Aorta (tissue), 5 donors: ENCODE measurements at regions of chr15 and their contacts with region 1.

Region 1: DNA sequence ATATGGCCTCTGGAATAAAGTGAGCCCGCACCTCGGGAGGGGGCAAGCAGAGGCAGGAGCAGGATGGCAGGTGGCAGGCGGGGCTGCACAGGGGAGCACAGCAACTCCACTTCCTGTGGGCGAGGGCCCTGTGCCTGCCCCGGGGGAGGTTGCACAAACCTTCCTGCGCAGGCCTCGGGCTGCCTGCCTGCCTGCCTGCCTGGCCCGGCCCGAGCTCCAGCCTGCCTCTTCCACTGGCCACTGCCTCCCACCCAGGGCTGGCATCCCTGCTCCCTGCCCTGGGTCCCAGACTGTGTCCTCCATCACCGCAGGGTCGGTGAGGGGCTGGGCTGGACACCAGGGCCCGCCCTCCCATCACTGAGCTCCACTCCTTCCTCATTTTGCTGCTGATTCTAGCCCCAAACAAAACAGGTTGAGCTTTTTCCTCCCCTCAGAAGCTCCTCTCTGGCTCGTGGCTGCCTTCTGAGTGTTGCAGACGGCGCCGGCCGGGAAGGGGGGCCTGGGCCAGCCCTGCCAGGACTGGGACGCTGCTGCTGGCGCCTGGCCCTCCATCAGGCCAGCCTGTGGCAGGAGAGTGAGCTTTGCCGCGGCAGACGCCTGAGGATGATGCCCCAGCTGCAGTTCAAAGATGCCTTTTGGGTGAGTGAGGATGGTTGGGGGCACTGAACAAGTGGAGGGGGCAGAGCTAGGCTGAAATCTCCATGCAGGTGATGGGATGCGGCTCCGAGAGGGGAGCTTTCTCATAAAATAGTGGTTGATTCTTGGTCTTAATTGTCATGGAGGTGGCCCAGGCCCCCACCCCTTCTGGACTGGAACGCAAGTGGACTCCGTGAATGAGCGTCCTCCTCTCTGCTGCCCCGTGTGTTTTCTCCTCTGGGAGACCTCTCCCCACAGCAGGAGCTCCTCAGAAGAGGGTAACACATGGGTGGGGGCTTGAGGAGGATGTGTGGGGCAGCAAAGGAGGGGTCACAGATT is at the start of gene PSTPIP1:
- DNase-seq: peak; percentile 80 to 90
- ATAC-seq: peak; percentile 70
- H3K4me3 ChIP-seq: no peak within 1 kb of the TSS
- H3K27ac ChIP-seq: peak within 1 kb of the TSS; percentile 64 to 85
- H3K4me1 ChIP-seq: no peaks in the 10 kb centered on the region
- H3K27me3 ChIP-seq: no peaks in the 10 kb centered on the region
- total RNA-seq, gene PSTPIP1: 14.1 to 42.9 TPM

Region 2: GRCh38 chr15:76973362-76973743 is 21.9 kb before region 1 on chr15:
- intact Hi-C with region 1: loop called in 1 of 2 experiments (anchors 2 kb)
- DNase-seq: peak; percentile 82
- ATAC-seq: peak; percentile 63
- H3K4me3 ChIP-seq: no peak overlapping the region
- H3K27ac ChIP-seq: peak overlapping the region; percentile 81 to 86
- H3K4me1 ChIP-seq: peaks cover 0 to 6% of the 10 kb centered on the region in 2 donors
- H3K27me3 ChIP-seq: no peaks in the 10 kb centered on the region

Region 3: DNA sequence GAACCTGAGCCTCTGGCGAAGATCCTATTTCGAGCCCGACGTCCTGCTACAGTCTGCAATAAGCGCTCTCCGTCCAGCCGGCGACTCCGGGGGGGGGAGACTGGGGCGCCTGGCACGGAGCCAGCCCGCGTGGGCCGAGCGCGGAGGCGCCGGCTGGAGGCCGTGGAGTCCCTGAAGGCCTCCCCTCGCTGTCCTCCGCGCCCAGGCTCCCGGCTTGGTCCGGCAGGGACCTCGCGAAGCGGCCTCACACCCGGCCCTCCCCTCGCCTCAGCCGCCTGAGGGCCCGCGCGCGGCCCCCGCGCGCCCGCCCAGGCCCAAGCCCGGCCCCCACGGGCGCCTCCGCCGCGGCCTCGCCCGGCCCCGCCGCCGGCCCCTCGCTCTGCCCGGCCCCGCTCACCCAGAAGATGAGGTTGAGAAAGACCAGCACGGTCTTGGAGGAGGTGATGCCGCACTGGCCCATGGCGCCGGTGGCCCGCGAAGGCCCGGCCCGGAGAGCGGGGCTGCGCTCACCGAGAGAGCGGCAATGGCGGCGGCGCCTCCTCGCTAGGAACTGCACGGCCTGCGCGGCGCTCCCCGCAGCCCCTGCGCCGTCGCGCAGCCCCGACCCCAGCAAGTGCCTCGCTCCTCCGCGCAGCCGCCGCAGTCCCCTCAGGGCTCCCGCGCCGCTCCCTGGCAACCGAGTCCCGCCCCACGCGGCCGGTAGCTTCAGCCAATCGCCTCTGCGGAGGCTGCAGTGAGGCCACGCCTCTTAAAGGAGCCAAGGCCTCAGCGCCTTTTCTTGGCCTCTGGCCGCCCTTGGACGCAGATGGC is 75.4 kb after region 1 on chr15 and contains the start of gene TSPAN3:
- intact Hi-C with region 1: loop called in 1 of 2 experiments (anchors 1 kb)
- DNase-seq: peak; percentile 96 to 97
- ATAC-seq: peak; percentile 97
- H3K4me3 ChIP-seq: peak within 1 kb of the TSS; percentile 95 to 99
- H3K27ac ChIP-seq: peak within 1 kb of the TSS; percentile 77 to 91
- H3K4me1 ChIP-seq: peaks cover 5 to 6% of the 10 kb centered on the region in 2 donors
- H3K27me3 ChIP-seq: no peaks in the 10 kb centered on the region
- total RNA-seq, gene TSPAN3: 106 to 121 TPM

Region 4: DNA sequence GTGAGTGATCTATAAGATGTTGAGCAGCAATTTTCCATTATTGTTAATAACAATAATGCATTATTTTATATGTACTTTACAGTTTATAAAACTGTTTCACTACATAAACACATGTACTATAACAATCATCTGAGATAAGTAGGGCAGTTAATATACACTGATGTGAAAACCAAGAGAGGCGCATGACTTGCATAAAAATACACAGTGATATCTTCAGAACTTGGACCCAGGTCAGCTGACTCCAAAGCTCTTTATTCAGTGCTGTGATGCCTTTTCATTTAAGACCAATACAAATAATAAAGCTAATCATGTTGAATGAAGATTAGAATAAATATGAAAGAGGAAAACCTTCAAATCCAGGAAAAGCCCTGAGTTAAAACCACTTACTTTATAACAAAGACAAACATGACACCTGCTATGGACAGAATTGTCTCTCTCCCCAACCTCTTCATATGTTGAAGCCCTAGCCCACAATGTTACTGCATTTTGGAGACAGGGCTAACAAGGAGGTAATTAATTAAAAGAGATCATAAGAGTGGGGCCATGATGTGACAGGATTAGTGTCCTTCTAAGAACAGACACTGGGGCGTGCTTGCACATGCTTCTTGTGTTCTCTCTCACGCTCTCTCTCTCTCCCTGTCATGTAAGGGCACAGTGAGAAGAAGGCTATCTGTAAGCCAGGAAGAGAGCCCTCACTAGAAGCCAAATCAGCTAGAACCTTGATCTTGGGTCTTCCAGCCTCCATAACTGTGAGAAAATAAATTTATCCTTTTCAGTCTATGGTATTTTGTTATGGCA is 131.5 kb after region 1 on chr15:
- intact Hi-C with region 1: no loop called
- DNase-seq: no peak
- ATAC-seq: no peak
- H3K4me3 ChIP-seq: no peak overlapping the region
- H3K27ac ChIP-seq: no peak overlapping the region
- H3K4me1 ChIP-seq: no peaks in the 10 kb centered on the region
- H3K27me3 ChIP-seq: no peaks in the 10 kb centered on the region